ENCODE measurements at regions of chr6 and their contacts with region 1.

Region 1: DNA sequence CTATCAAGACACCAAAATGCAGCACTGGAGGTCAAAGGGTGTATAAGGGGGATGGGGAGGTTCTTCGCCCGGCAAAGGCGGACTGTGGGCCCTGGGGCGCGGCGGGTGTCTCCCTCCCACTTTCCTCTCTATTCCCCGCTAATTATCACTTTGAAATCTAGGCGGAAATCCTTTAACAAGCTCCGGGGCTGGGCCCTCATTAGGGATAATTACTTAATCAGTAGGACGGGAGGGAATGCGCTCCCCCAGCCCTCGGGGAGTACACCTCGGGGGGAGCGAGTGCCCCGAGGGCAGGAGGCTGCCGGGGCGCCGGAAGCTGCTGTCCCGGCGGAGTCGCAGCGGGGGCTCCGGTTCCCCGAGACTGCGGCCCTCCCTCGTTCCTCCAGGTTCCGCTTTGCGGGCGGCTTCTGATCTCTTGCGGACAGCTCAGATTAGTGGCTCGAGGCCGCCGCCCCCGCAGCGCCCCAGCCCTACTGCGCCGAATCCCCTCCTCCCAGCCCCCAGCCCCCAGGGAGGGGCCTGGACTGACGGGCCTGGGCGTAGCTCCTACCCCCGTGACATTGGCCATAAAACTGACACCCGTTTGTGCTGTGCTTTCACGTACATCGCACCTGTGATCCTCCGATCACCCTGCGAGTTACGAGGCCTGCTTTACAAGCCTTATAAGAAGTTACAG is 14.7 kb downstream of the MUCL3 start:
- DNase-seq: peak; percentile 80
- ATAC-seq: peak; percentile 82
- H3K4me3 Mint-ChIP-seq: peak overlapping the region; percentile 64
- H3K27ac Mint-ChIP-seq: no peak overlapping the region
- H3K4me1 Mint-ChIP-seq: peaks cover 24% of the 10 kb centered on the region
- H3K27me3 Mint-ChIP-seq: peaks cover 69% of the 10 kb centered on the region
- CTCF ChIP-seq: no peak

Region 2: DNA sequence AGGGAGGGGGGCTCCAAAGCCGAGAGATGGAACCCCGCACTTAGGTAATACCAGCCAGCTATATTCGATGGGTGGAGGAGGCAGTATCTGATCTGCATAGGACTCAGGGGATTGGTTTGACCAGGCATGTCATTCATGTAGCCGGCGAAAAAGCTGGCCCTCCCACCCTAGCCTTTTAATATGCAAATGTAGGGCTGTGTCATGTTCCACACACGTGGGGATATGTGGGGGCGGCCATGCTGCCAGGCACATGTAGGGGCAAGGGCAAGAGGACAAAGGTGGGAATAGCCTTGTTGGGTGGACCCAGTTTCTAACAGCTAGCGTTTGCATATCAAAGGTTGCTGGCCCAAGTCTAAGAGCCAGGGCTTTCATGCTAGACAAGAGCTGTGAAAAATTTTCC is 110.3 kb before region 1 on chr6:
- CTCF ChIA-PET with region 1: no interaction called
- POLR2A ChIA-PET with region 1: no interaction called
- DNase-seq: peak; percentile 51
- ATAC-seq: peak; percentile 5
- H3K4me3 Mint-ChIP-seq: no peak overlapping the region
- H3K27ac Mint-ChIP-seq: peak overlapping the region; percentile 83
- H3K4me1 Mint-ChIP-seq: peaks cover 85% of the 10 kb centered on the region
- H3K27me3 Mint-ChIP-seq: peaks cover under 1% of the 10 kb centered on the region; the same call in 1 of the 2 replicates
- CTCF ChIP-seq: no peak

Region 3: DNA sequence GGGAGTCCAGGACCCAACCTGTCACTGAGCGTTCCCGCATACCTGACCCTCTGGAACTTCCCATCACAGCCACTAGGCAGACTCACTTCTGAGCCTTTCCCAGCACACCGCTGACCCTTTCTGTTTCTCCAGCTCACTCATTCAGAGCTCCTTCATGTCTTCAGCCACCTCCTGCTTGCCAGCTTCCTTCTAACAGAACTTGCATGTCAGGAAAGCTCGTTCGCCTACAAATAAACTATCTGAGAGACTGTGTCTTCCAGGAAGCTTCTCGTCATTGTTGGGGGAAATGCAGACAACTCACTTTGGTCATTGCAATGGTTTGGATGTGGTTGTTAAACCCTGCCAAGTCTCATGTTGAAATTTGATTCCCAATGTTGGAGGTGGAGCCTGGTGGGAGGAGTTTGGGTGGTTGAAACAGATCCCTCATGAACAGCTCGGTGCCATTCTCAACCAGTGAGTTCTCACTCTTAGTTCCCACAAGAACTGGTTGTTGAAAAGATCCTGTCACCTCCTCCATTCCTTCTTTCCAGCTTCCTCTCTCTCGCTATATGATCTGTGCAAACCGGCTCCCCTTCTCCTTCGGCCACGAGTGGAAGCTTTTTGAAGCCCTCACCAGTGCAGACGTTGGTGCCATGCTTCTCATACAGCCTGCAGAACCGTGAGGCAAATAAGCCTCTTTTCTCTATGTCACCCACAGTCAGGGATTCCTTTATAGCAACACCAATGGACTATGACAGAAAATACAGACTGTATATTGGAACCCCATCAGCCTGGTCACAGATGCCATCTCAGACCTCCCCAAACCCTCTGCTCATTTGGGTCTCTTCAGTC is 26.7 kb after region 1 on chr6:
- CTCF ChIA-PET with region 1: interaction called, 10 read pairs
- POLR2A ChIA-PET with region 1: no interaction called
- DNase-seq: peak; percentile 67
- ATAC-seq: peak; percentile 99
- H3K4me3 Mint-ChIP-seq: peak overlapping the region; percentile 57
- H3K27ac Mint-ChIP-seq: peak overlapping the region; percentile 92
- H3K4me1 Mint-ChIP-seq: peaks cover 21% of the 10 kb centered on the region
- H3K27me3 Mint-ChIP-seq: no peaks in the 10 kb centered on the region; the same call in none of the 2 replicates
- CTCF ChIP-seq: no peak

Region 4: DNA sequence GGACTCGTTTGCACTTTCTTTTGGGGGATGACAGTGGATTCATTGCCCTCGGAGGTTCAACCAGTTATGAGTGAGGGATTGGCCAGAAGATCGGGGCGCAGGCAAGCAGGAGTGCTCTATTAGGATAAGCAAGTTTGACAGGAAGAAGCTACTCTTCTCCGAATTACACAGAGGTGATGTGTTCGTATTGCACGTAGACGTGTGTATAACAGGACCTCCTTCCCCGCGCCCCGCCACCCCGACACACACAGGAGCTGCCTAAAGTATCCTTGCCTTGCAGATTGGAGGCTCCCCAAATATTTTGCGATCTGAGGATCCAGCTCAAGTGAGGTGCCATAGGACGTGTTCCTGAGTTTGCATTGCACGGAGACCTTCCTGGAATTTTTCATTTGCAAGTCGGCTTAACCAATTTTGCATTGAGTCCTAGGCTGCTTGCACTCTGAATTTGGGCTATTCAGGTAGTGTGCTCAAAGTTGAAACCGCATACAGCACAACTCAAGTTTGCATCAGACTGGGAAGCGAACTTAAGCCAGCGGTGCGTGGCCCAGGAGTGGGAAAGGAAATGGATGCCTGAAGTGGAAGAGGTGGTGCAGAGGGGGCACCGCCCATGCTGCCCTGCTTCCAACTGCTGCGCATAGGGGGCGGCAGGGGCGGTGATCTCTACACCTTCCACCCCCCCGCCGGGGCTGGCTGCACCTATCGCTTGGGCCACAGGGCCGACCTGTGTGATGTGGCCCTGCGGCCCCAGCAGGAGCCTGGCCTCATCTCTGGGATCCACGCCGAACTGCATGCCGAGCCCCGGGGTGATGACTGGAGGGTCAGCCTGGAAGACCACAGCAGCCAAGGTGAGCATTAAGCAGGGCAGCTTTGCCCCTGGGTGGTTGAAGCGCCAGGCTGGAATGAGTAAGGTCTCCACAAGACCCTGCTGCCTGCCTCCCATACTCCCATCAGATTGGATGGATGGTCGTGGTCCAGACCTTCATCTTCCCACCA is 203.7 kb after region 1 on chr6:
- CTCF ChIA-PET with region 1: no interaction called
- POLR2A ChIA-PET with region 1: no interaction called
- DNase-seq: peak; percentile 70
- ATAC-seq: peak; percentile 26
- H3K4me3 Mint-ChIP-seq: peak overlapping the region; percentile 96
- H3K27ac Mint-ChIP-seq: peak overlapping the region; percentile 93; the same call in 1 of the 2 replicates
- H3K4me1 Mint-ChIP-seq: peaks cover 42% of the 10 kb centered on the region
- H3K27me3 Mint-ChIP-seq: no peaks in the 10 kb centered on the region
- CTCF ChIP-seq: no peak

Measured in WTC11 (cell line).